Heart left ventricle (tissue), 16 donors: ENCODE measurements at regions of chr18 and their contacts with region 1.

Region 1: DNA sequence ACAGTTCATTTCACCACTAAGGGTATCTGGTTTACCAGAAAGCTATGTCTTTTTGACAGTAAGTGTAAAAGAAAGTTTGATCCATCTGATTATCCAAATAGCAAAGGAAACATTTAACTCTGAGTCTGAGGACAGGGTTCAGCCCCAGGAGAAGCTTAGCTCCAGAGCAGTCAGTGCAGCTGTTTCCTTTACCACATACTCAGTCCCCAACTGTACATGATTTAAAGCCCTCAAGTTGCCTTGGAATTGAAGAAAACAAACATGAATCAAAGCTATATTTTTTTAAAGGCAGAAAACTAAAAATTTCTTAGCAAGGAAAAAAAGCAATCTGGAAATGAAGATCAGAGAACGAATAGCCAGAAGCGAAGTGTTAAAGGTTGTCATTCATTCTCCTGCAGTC is 746.0 kb downstream of the METTL4 start:
- DNase-seq: no peak
- ATAC-seq: no peak
- H3K4me3 ChIP-seq: no peak overlapping the region
- H3K27ac ChIP-seq: no peak overlapping the region
- H3K4me1 ChIP-seq: no peaks in the 10 kb centered on the region
- H3K27me3 ChIP-seq: no peaks in the 10 kb centered on the region
- CTCF ChIP-seq: no peak
- POLR2A ChIP-seq: no peak

Region 2: GRCh38 chr18:1875219-1875618 is 49.9 kb after region 1 on chr18:
- intact Hi-C with region 1: loop called in 1 of 10 experiments (anchors 5 kb)
- DNase-seq: no peak
- ATAC-seq: no peak
- H3K4me3 ChIP-seq: no peak overlapping the region
- H3K27ac ChIP-seq: no peak overlapping the region
- H3K4me1 ChIP-seq: no peaks in the 10 kb centered on the region
- H3K27me3 ChIP-seq: no peaks in the 10 kb centered on the region
- CTCF ChIP-seq: no peak
- POLR2A ChIP-seq: no peak

Region 3: DNA sequence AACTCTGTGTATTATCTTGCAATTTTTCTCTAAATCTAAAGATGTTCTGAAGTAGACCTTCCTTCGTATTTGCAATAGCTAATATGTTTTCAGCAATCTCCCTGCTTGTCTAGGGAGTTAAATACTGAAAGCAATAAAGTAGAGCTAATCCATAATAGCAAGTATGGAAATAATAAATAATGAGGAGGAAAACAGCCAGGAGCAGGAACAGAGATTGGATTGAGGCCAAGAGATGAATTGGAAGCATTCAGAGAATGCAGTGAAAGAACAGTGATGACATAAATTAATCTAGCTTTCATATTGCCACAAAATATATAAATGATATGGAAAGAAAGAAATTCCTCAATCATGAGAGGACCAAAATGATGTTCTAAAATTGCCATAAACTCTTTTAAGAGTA is 66.3 kb after region 1 on chr18:
- intact Hi-C with region 1: loop called in 1 of 10 experiments (anchors 10 kb)
- DNase-seq: no peak
- ATAC-seq: no peak
- H3K4me3 ChIP-seq: no peak overlapping the region
- H3K27ac ChIP-seq: no peak overlapping the region
- H3K4me1 ChIP-seq: no peaks in the 10 kb centered on the region
- H3K27me3 ChIP-seq: no peaks in the 10 kb centered on the region
- CTCF ChIP-seq: no peak
- POLR2A ChIP-seq: no peak